A549 (cell line): ENCODE measurements at regions of chr15 and their contacts with region 1.

Region 1: GRCh38 chr15:67303490-67304363 is 49.1 kb downstream of the IQCH start:
- DNase-seq: peak; percentile 30 to 76
- ATAC-seq: peak; percentile 71 to 90
- H3K4me3 ChIP-seq: no peak overlapping the region
- H3K27ac ChIP-seq: peak overlapping the region in 1 of 2 experiments; percentile 49; a peak in 2 of 6 replicates
- H3K4me1 ChIP-seq: peaks cover 20% of the 10 kb centered on the region; the same call in 2 of the 3 replicates
- CTCF ChIP-seq: peak; percentile 96
- EP300 ChIP-seq: no peak
- POLR2A ChIP-seq: no peak
- RAD21 ChIP-seq: peak; percentile 96 to 98

Region 2: GRCh38 chr15:66720206-66721006 is 583.3 kb before region 1 on chr15:
- CTCF ChIA-PET with region 1: no interaction called
- POLR2A ChIA-PET with region 1: no interaction called
- DNase-seq: peak in 1 of 2 experiments; percentile 44
- ATAC-seq: peak; percentile 51 to 59; a peak in 5 of 6 replicates
- H3K4me3 ChIP-seq: no peak overlapping the region
- H3K27ac ChIP-seq: peak overlapping the region in 1 of 2 experiments; percentile 46; a peak in 3 of 6 replicates
- H3K4me1 ChIP-seq: peaks cover 91% of the 10 kb centered on the region
- CTCF ChIP-seq: no peak
- EP300 ChIP-seq: no peak
- POLR2A ChIP-seq: no peak
- RAD21 ChIP-seq: no peak

Region 3: GRCh38 chr15:66955871-66956585 is 347.7 kb before region 1 on chr15:
- CTCF ChIA-PET with region 1: interaction called, 115 read pairs
- POLR2A ChIA-PET with region 1: no interaction called
- DNase-seq: peak; percentile 49 to 67
- ATAC-seq: peak; percentile 72 to 76
- H3K4me3 ChIP-seq: no peak overlapping the region
- H3K27ac ChIP-seq: peak overlapping the region in 1 of 2 experiments; percentile 60; a peak in 3 of 6 replicates
- H3K4me1 ChIP-seq: peaks cover 18% of the 10 kb centered on the region
- CTCF ChIP-seq: no peak
- EP300 ChIP-seq: no peak
- POLR2A ChIP-seq: no peak
- RAD21 ChIP-seq: no peak

Region 4: DNA sequence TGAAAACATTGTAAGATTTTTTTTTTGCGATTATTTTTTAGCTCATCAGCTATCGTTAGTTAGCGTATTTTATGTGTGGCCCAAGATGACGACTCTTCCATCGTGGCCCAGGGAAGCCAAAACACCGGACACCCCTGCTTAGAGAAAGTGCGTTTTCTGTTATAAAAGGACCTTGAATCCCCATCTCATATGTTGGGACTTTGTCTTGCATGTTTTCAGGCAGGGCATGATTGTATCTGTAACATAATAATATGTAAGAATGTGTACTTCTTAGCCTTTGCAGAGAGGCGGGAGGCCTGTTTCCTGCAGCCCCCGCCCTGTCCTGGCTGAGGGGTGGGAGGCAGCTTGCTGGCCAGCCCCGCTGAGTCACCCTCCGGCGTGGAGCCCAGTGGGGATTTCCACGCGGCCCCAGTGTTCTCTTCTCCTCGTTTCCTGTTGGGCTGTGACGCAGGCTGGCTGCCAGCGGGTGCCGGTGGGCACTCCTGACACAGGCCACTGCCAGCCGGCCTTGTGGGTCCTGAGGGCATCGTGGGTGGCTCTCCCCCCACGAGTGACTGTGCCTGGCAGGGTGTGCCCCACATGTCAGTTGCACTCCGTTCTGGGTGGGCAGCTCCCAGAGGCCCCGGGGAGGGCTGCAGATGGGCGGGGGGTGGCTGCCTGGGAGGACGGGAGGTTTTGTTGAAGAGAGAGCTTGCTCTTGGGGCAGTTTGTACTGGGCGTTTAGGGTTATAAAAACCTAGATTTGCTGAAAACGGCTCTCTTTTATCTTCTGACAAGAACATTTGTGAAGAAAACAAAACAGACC is 182.7 kb before region 1 on chr15:
- CTCF ChIA-PET with region 1: interaction called, 12 read pairs
- POLR2A ChIA-PET with region 1: no interaction called
- DNase-seq: peak; percentile 87 to 90
- ATAC-seq: peak; percentile 6 to 24; a peak in 4 of 6 replicates
- H3K4me3 ChIP-seq: peak overlapping the region; percentile 2; the same call in 1 of the 3 replicates
- H3K27ac ChIP-seq: peak overlapping the region; percentile 86 to 92
- H3K4me1 ChIP-seq: peaks cover 97% of the 10 kb centered on the region
- CTCF ChIP-seq: no peak
- EP300 ChIP-seq: peak; percentile 80 to 94; a peak in 3 of 5 replicates
- POLR2A ChIP-seq: no peak
- RAD21 ChIP-seq: peak; percentile 2 to 27; a peak in 2 of 5 replicates

Region 5: DNA sequence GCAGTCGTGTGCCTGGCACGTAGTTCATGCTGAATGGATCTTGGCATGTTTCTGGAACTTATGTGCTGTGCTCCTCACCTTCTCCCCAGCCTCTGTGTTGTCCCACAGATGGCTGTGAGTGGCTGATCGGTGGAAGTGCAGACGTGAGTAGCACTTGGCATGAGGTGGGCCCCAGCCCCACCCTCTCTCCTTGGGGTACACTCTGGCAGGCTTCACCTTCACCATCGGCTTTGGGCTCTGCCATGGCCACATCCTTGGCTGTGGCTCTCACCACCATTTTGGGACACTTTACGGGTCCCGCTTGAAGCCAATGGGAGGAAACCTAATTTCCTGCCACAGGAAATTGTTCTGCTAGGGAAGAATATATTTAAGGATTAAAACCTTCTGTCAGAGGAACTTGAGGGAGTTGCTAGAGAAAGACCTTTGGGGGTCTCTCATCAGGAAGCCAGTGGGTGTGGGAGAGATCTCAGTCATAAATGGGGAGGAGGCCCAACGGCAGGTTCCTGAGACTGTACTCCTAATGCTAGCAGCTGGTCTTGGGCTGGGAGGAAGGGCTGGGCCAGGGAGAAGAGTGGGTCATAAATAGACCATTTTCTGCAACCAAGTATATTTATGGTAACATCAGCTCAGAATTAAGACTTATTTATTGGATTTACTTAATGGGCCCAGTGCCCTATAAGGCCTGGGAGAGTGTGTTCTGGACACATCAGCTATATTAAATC is 146.0 kb before region 1 on chr15:
- CTCF ChIA-PET with region 1: no interaction called
- POLR2A ChIA-PET with region 1: no interaction called
- DNase-seq: no peak
- ATAC-seq: peak in 1 of 2 experiments; percentile 10; a peak in 3 of 6 replicates
- H3K4me3 ChIP-seq: no peak overlapping the region
- H3K27ac ChIP-seq: peak overlapping the region in 1 of 2 experiments; percentile 71; a peak in 3 of 6 replicates
- H3K4me1 ChIP-seq: peaks cover 82% of the 10 kb centered on the region
- CTCF ChIP-seq: no peak
- EP300 ChIP-seq: no peak
- POLR2A ChIP-seq: no peak
- RAD21 ChIP-seq: no peak

Region 6: GRCh38 chr15:67230504-67230903 is 73.2 kb before region 1 on chr15:
- CTCF ChIA-PET with region 1: interaction called, 10 read pairs
- POLR2A ChIA-PET with region 1: no interaction called
- DNase-seq: no peak
- ATAC-seq: peak; percentile 25 to 30; a peak in 3 of 6 replicates
- H3K4me3 ChIP-seq: no peak overlapping the region
- H3K27ac ChIP-seq: no peak overlapping the region
- H3K4me1 ChIP-seq: peaks cover 8% of the 10 kb centered on the region
- CTCF ChIP-seq: no peak
- EP300 ChIP-seq: no peak
- POLR2A ChIP-seq: no peak
- RAD21 ChIP-seq: no peak

Region 7: GRCh38 chr15:67290319-67290718 is 13.4 kb before region 1 on chr15:
- CTCF ChIA-PET with region 1: interaction called, 23 read pairs
- POLR2A ChIA-PET with region 1: no interaction called
- DNase-seq: no peak
- ATAC-seq: no peak
- H3K4me3 ChIP-seq: no peak overlapping the region
- H3K27ac ChIP-seq: no peak overlapping the region
- H3K4me1 ChIP-seq: no peaks in the 10 kb centered on the region
- CTCF ChIP-seq: no peak
- EP300 ChIP-seq: no peak
- POLR2A ChIP-seq: no peak
- RAD21 ChIP-seq: no peak